Head of caudate nucleus (tissue), 42 donors: ENCODE measurements at regions of chr20 and their contacts with region 1.

Region 1: GRCh38 chr20:48657475-48658470 is 170.0 kb downstream of the PREX1 start:
- DNase-seq: peak; percentile 57 to 94 (median 86)

Region 2: DNA sequence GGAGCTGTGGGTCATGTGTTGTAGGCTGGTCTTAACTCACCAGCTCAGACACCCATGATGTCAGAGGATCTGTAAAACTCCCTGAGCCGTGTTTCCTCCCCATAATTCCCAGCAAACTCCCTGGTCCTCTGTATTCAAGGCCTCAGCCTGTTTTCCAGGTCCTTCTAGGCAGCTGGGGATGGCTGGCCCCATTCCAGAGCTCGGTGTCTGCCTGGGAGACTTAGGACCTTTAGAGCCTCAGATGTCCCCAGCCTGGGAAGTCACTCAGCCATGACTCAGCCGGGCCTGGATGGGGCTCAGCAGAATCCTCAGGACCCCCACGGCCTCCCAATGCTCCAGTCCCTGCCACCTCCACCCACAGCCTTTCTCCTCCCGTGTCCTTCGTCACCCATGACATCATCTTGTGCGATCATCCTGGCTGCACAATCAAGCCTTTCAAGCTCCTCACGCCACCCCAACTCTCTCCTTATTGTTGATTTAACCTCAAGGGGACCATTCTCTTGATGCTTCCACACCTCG is 397.4 kb before region 1 on chr20:
- intact Hi-C with region 1: no loop called
- DNase-seq: peak in 37 of 42 donors; percentile 17 to 83 (median 51)

Region 3: DNA sequence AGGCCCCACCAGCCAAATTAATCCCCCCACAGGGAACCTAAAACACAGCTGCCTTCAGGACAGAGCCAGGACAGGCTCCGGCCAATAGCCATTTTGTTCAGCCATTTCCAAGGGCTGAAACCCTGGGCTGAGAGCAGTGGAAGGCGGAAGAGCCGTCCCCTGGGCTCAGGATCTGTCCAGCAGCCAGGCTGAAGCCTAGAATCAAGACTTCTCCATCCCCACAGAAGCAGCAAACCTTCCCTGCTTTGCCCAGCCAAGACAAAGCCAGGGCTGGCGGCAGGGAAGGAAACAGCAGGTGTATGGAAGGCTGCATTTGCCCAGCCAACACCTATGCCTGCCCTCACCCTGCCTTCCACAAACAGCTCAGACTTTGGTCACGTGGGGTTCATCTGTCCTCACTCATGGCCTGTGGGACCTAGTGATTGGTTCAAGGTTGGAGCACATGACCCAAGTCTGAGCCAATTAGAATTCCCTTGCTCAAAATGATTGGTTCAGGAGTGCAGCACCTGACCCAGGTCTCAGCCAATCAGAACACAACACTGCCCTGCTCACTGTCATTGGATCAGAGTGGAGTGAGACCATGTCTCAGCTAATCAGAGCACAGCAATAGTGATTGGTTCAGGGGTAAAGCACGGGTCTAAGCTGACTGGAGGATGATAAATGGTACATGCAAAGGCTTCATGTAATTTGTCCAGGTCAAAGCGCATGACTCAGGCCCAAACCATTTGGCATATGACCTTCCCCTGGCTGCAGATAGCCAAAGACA is 67.6 kb after region 1 on chr20:
- intact Hi-C with region 1: loop called (anchors 5 kb)
- DNase-seq: no peak

Region 4: DNA sequence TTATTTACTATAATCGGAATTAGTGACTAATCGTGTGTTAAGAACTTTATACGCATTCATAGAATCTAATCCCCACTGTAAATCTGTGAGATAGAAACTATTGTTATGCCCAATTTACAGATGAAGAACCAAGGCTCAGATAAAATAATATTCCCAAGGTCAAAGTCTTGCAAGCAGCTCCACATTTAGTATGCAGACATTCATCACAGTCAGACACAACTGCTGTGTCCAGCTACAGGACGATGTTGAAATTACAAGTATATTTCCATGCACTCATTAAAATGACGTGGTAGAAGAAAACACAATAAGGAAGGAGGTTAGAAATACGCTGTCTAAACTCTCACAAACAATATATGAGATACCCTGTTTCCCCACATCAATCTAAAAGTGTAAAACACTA is 87.6 kb after region 1 on chr20:
- intact Hi-C with region 1: loop called (anchors 5 kb)
- DNase-seq: no peak

Region 5: GRCh38 chr20:48807661-48808427 is 150.1 kb after region 1 on chr20:
- intact Hi-C with region 1: loop called (anchors 5 kb)
- DNase-seq: peak in 37 of 42 donors; percentile 37 to 89 (median 67)

Region 6: GRCh38 chr20:48828022-48828743 is 170.4 kb after region 1 on chr20:
- intact Hi-C with region 1: loop called (anchors 2 kb)
- DNase-seq: peak in 40 of 42 donors; percentile 71 to 94 (median 86)

Region 7: DNA sequence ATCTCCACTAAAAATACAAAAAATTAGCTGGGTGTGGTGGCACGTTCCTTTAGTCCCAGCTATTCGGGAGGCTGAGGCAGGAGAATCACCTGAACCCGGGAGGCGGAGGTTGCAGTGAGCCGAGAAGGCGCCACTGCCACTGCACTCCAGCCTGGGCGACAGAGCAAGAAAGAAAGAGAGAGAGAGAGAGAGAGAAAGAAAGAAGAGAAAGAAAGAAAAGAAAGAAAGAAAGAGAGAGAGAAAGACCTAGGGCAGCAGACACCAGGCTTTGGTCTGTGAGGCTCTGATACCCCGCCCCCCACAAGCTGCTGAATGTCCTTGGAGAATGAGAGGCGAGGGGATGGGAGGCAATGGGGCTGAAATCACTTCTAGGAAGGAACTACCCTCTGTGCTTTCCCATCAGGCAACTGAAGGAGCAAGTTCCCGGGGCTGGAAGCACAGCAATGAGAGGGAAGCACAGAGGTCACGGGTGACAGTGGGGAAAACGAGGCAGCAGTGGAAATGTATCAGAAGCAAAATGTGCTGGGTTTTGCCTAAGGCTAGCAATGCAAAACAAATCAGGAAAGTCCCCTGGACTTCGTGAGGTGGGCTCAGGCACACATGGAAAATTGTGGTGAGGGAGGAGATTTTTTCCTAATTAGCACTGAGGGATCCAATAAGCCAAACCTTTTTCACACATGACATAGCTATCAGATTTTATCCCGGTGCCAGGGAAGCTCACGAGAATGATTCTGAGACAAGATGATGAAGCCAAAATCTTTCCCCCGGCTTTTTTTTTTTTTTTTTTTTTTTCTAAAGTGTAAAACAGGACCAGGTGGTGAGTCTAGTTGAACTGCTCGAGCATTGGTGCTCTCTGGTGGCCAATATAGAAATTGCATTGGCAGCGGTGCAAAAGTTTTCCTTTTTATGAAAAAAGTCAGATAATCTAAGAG is 246.9 kb after region 1 on chr20:
- intact Hi-C with region 1: loop called (anchors 2 kb)
- DNase-seq: peak in 41 of 42 donors; percentile 23 to 89 (median 72)